Activated CD8-positive, alpha-beta memory T cell treated with anti-CD3 and anti-CD28 coated beads, Interleukin-2, amount 10 ng/mL, durations not matched to agents 7 days and 5 days (primary cell): ENCODE measurements at regions of chr6 and their contacts with region 1.

Region 1: GRCh38 chr6:44475779-44476434 is 88.4 kb downstream of the CDC5L start:
- DNase-seq: peak; percentile 77
- ATAC-seq: peak; percentile 91
- H3K4me3 Mint-ChIP-seq: no peak overlapping the region
- H3K27ac Mint-ChIP-seq: no peak overlapping the region
- H3K4me1 Mint-ChIP-seq: peaks cover 7% of the 10 kb centered on the region
- H3K27me3 Mint-ChIP-seq: peaks cover 17% of the 10 kb centered on the region

Region 2: DNA sequence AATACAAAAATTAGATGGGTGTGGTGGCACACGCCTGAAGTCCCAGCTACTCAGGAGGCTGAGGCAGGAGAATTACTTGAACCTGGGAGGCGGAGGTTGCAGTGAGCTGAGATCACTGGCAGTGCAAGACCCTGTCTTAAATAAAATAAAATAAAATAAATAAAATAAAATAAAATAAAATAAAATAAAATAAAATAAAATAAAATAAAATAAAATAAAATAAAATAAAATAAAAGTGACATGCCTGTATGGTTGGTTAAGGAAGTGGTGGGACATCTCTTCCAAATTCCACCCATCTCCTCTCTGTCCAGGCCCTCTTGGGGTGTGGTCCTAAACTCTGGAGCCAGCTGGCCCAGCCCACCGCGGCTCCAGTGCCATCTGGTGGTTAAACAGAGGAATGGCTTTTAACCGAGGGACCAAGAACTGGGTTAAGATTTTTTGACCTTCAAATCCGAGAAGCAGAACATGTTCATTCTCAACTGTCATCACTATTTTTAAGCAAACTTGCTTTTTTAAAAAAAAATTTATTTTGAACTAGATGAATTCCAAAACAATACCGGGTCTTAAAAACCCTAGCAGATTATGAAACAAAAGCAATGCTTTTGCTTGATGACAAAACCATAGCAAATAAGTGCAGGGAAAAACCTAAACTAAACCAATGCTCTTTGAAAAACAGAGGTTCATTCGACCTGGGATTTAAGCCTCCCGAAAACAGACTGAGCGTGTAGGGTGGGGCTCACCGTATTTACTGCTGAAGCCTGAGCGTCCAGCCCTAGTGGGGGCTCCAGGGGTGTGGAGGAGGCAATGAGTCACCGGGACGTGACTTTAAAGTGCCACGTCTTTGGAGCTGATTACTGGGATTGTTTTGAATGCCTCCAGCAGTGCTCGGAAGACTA is 19.6 kb before region 1 on chr6:
- CTCF ChIA-PET with region 1: interaction called, 14 read pairs
- DNase-seq: no peak
- ATAC-seq: peak; percentile 78
- H3K4me3 Mint-ChIP-seq: no peak overlapping the region
- H3K27ac Mint-ChIP-seq: no peak overlapping the region
- H3K4me1 Mint-ChIP-seq: peaks cover 6% of the 10 kb centered on the region
- H3K27me3 Mint-ChIP-seq: peaks cover 9% of the 10 kb centered on the region

Region 3: DNA sequence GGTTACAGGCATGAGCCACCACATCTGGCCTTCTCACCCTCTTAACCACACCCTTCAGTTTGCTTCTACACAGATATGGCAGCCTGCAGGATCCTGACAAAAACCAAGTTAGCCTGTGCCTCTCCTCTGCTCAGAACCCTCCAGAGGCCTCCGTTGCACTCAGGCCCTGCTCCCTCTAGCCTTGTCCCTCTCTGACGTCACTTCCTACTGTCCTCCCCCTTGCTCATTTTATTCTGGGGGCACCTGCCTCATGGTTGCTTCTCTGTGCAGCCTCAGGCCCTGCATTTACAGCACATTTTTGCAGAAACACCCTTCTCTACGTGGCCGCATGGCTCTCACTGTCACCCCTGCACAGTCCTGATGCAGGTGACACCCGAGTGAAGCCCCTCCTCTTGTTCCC is 17.2 kb after region 1 on chr6:
- CTCF ChIA-PET with region 1: interaction called, 10 read pairs
- DNase-seq: no peak
- ATAC-seq: no peak
- H3K4me3 Mint-ChIP-seq: no peak overlapping the region
- H3K27ac Mint-ChIP-seq: no peak overlapping the region
- H3K4me1 Mint-ChIP-seq: no peaks in the 10 kb centered on the region
- H3K27me3 Mint-ChIP-seq: peaks cover 13% of the 10 kb centered on the region

Region 4: GRCh38 chr6:44514085-44514484 is 38.2 kb after region 1 on chr6:
- CTCF ChIA-PET with region 1: no interaction called
- DNase-seq: no peak
- ATAC-seq: no peak
- H3K4me3 Mint-ChIP-seq: no peak overlapping the region
- H3K27ac Mint-ChIP-seq: no peak overlapping the region
- H3K4me1 Mint-ChIP-seq: no peaks in the 10 kb centered on the region
- H3K27me3 Mint-ChIP-seq: peaks cover 39% of the 10 kb centered on the region

Region 5: DNA sequence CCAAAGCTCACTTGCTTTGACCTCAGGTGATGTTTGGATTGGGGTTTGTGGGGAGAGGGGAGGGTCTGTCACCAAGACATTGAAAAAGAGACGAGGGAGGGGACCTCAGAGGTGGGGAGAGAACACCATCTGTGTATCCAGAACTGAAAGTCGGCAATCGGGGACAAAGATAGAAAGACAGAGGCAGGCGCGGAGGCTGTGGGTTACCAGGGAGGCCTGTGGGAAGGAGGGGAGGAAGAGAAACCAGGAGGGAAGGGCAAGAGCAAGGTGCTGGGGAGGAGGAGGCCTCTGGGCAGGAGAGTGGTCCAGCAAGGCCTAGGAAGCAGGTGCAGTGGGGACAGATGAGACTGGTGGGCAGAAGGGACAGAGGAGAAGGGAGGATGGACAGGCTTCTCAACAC is 122.8 kb after region 1 on chr6:
- CTCF ChIA-PET with region 1: interaction called, 10 read pairs
- DNase-seq: no peak
- ATAC-seq: no peak
- H3K4me3 Mint-ChIP-seq: no peak overlapping the region
- H3K27ac Mint-ChIP-seq: no peak overlapping the region
- H3K4me1 Mint-ChIP-seq: peaks cover 2% of the 10 kb centered on the region
- H3K27me3 Mint-ChIP-seq: peaks cover 9% of the 10 kb centered on the region

Region 6: GRCh38 chr6:45714741-45715507 is 1239.0 kb after region 1 on chr6:
- CTCF ChIA-PET with region 1: interaction called, 12 read pairs
- DNase-seq: peak; percentile 71
- ATAC-seq: peak; percentile 63
- H3K4me3 Mint-ChIP-seq: no peak overlapping the region
- H3K27ac Mint-ChIP-seq: peak overlapping the region; percentile 71
- H3K4me1 Mint-ChIP-seq: peaks cover 57% of the 10 kb centered on the region
- H3K27me3 Mint-ChIP-seq: no peaks in the 10 kb centered on the region